Ascending aorta (tissue), 2 donors: ENCODE measurements at regions of chr10 and their contacts with region 1.

Region 1: DNA sequence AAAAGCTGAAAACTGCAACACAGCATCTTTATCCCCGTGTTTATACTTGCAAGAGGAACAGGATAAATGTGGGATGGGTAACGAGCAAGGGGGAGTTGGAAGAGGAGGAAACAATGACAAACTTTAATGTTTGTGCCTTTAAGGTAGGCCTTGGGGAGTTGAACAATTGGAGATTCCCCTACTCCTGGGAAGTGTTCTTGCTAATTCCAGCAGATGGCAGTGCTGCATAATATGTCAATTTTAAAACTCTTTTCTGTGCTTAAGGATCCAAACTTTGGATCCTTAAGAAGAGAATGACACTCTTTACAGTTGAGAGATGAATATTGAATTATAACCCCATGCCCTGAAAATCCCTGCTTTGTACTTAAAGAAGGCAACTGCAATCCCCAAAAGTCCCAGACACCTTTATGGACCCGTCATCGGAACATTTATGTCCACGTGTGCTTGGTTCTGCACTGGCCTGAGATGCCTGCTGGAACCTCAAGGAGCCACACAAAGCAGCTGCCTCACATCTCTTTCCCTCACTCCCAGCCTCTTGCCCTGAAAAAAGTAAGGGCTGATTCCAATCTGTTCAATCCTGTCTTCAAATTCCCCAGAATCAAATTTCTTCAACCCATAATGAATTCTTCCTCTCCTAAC is 12.0 kb downstream of the IFIT5 start:
- DNase-seq: no peak
- H3K4me3 ChIP-seq: no peak overlapping the region
- H3K27ac ChIP-seq: no peak overlapping the region
- H3K4me1 ChIP-seq: no peaks in the 10 kb centered on the region
- H3K27me3 ChIP-seq: no peaks in the 10 kb centered on the region
- CTCF ChIP-seq: peak; percentile 75 to 80 (median 79)

Region 2: GRCh38 chr10:89042562-89042961 is 383.8 kb before region 1 on chr10:
- intact Hi-C with region 1: no loop called
- DNase-seq: no peak
- H3K4me3 ChIP-seq: no peak overlapping the region
- H3K27ac ChIP-seq: no peak overlapping the region
- H3K4me1 ChIP-seq: no peaks in the 10 kb centered on the region
- H3K27me3 ChIP-seq: no peaks in the 10 kb centered on the region
- CTCF ChIP-seq: no peak

Region 3: DNA sequence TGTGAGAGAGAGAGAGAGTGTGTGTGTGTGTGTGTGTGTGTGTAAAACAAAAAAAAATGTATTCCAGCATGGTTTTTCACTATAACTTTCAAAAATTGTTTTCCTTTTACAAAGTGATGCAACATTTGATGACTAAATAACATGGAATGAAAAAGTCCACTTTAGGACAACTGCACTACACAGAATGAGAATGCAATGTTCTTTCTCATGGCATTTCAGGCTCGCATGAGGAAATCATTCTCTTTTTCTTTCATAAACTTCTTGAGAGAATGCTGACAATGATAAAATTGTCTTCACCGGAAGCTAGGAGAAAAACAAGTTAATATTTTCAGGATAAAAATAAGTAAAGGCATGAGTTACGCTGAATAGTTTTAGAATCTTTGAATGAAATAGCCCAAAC is 55.3 kb after region 1 on chr10:
- intact Hi-C with region 1: loop called (anchors 5 kb)
- DNase-seq: no peak
- H3K4me3 ChIP-seq: no peak overlapping the region
- H3K27ac ChIP-seq: peak overlapping the region; percentile 29 to 62
- H3K4me1 ChIP-seq: peaks cover 6 to 48% of the 10 kb centered on the region in 2 donors
- H3K27me3 ChIP-seq: no peaks in the 10 kb centered on the region
- CTCF ChIP-seq: no peak

Region 4: DNA sequence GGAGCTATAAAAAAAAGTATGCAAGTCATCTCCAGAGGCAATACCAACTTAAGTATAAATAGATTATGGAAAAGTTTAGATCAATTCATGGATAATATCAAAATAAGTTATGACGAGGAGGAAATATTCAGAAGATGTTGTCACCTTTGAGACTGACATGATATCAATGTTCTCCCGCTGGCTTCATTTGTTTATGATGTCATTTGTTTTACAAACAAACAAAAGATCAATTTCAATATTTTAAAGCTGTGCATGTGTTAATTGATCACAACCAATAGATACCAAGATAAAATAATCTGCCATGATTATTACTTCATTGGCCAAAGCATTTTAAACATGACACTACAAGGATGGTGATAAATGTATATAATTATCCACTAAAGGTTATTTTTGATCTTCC is 65.6 kb after region 1 on chr10:
- intact Hi-C with region 1: no loop called
- DNase-seq: no peak
- H3K4me3 ChIP-seq: no peak overlapping the region
- H3K27ac ChIP-seq: no peak overlapping the region
- H3K4me1 ChIP-seq: no peaks in the 10 kb centered on the region
- H3K27me3 ChIP-seq: no peaks in the 10 kb centered on the region
- CTCF ChIP-seq: no peak

Region 5: DNA sequence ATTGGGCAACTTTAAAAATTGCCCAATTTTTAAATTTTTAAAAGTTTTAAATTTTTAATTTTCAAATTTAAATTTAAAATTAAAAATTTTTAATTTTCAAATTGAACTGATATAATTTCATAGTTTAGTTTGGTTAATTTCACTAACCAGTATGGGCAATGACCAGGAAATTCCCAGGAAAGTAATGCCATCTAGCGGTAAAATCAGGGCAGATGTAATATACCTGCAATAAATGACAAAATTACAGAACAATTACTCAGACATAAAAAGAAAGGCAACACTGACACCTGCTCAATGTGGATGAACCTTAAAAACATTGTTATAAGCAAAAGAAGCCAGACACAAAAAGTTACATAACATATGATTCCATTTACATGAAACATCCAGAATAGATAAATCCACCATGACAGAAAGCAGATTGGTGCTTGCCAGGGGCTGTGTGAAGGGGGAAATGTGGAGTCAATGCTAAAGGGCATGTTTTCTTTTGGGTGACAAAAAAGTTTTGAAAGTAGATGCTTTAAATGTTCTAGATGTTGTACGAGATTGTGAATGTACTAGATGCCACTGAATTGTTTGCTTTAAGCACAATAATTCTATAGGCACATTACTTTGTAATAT is 137.6 kb after region 1 on chr10:
- intact Hi-C with region 1: loop called (anchors 1 kb)
- DNase-seq: no peak
- H3K4me3 ChIP-seq: no peak overlapping the region
- H3K27ac ChIP-seq: no peak overlapping the region
- H3K4me1 ChIP-seq: no peaks in the 10 kb centered on the region
- H3K27me3 ChIP-seq: no peaks in the 10 kb centered on the region
- CTCF ChIP-seq: peak; percentile 68 to 78 (median 75)

Region 6: GRCh38 chr10:89643431-89644331 is 217.3 kb after region 1 on chr10:
- intact Hi-C with region 1: loop called (anchors 10 kb)
- DNase-seq: peak; percentile 61 to 89
- H3K4me3 ChIP-seq: peak overlapping the region; percentile 92 to 97
- H3K27ac ChIP-seq: peak overlapping the region; percentile 72 to 91
- H3K4me1 ChIP-seq: no peaks in the 10 kb centered on the region
- H3K27me3 ChIP-seq: no peaks in the 10 kb centered on the region
- CTCF ChIP-seq: no peak

Region 7: GRCh38 chr10:89701238-89702120 is 275.1 kb after region 1 on chr10 and contains the start of gene KIF20B:
- intact Hi-C with region 1: loop called (anchors 5 kb)
- DNase-seq: peak; percentile 85 to 97
- H3K4me3 ChIP-seq: peak within 1 kb of the TSS; percentile 63 to 95
- H3K27ac ChIP-seq: peak within 1 kb of the TSS; percentile 66 to 83
- H3K4me1 ChIP-seq: peaks cover 2 to 9% of the 10 kb centered on the region in 2 donors
- H3K27me3 ChIP-seq: no peaks in the 10 kb centered on the region
- CTCF ChIP-seq: peak in 2 of 3 experiments; percentile 19 to 42
- total RNA-seq, gene KIF20B: 2.4 TPM